Heart left ventricle (tissue), 16 donors: ENCODE measurements at regions of chr11 and their contacts with region 1.

Region 1: DNA sequence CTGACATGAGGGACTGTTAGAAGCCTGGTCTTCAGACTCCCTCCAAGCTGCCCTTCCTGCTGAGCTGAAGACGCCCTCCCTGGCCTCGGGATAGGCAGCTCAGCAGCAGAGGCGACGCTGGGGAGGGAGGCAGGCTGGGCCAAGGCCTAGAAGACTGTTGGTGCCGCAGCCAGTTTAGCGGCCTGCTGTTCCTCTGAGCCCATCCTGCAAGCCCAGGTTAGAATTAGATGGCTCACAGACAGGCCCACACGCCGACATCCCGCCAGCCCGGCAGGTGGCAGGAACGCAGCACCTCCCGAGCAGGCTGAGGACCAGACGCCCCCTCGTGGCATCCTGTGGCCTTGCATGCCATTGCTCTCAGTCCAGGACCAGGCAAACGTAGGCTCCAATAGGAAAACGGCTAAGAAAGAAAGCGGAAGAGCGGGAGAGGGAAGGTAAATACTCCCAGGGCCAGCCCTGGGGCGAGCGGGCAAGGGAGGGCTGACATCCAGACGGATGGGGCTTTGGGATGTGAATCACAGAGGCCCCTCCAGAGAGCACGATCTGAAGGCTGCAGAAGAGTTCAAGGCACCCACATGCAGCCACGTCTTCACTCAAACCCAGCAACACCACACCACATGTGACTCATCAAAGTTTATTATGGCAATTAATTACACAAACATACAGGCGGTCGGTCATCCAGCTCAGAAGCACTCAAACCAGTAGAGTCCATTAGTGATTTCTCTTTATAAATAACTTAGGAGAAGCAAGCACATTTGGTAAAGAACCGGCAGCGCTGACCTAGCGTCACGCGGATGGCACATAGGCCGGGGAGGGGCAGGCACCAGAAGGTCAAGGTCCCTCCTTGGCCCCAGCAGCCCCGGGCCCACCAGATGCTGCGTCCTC is 27.6 kb downstream of the CD5 start:
- DNase-seq: peak; percentile 84 to 92 (median 85)
- ATAC-seq: peak; percentile 66 to 91 (median 88)
- H3K4me3 ChIP-seq: peak overlapping the region in 2 of 12 donors; percentile 9 to 23
- H3K27ac ChIP-seq: peak overlapping the region in 4 of 12 donors; percentile 13 to 61 (median 37)
- H3K4me1 ChIP-seq: peaks cover 0 to 22% (median 11%) of the 10 kb centered on the region in 12 donors
- H3K27me3 ChIP-seq: no peaks in the 10 kb centered on the region
- CTCF ChIP-seq: peak; percentile 94 to 100 (median 99)
- POLR2A ChIP-seq: no peak

Region 2: GRCh38 chr11:60700689-60701480 is 429.0 kb before region 1 on chr11:
- intact Hi-C with region 1: no loop called
- DNase-seq: no peak
- ATAC-seq: no peak
- H3K4me3 ChIP-seq: no peak overlapping the region
- H3K27ac ChIP-seq: no peak overlapping the region
- H3K4me1 ChIP-seq: no peaks in the 10 kb centered on the region
- H3K27me3 ChIP-seq: peaks cover 0 to 4% (median 0%) of the 10 kb centered on the region in 9 donors
- CTCF ChIP-seq: peak in 3 of 12 donors; percentile 7 to 31 (median 18)
- POLR2A ChIP-seq: no peak

Region 3: GRCh38 chr11:60775420-60775961 is 354.4 kb before region 1 on chr11:
- intact Hi-C with region 1: loop called in 2 of 10 experiments (anchors 5 kb)
- DNase-seq: peak; percentile 73 to 85 (median 83)
- ATAC-seq: peak; percentile 79 to 86 (median 85)
- H3K4me3 ChIP-seq: no peak overlapping the region
- H3K27ac ChIP-seq: peak overlapping the region in 6 of 12 donors; percentile 17 to 59 (median 49)
- H3K4me1 ChIP-seq: peaks cover 0 to 22% (median 9%) of the 10 kb centered on the region in 12 donors
- H3K27me3 ChIP-seq: peaks cover 0 to 14% (median 0%) of the 10 kb centered on the region in 9 donors
- CTCF ChIP-seq: peak; percentile 79 to 97 (median 92)
- POLR2A ChIP-seq: no peak

Region 4: DNA sequence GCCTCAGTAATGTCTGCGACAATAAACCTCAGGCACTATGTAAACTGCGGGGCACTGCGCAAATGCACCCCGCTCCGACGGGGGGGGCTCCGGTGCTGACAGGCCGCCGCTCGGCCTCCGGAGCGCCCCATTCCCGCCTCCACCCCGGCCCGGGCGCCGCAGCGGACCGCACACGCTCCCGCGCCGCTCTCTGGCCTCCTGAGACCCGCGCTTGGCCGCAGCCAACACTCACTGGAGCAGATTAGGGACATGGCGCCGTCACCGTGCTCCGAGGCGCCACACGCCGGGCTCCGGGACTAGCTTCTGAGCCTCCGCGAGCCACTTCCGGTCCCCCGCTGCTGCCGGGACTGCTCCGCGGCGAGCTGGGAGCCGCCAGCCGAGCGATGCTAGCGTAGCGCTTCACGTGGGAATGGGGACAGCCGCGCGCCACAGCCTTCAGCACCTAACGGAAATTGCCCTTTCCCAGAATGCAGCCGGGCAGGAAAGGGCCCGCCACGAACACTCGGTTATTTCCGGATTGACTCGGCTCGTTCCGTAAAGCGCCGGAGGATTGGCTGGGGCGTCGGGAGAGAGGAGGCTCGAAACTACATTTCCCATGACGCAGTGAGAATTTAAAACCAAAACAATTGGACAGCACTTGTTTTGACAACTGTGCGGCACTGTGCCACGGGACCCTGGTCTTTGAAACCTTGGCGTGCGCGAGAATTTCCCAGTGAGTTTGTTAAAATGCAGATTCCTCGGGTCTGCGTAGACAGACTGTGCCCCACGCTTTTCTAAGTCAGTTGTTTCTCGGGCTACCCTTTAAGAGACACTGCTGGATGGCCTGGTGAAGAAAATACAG is 223.5 kb before region 1 on chr11 and contains the start of gene PRPF19:
- intact Hi-C with region 1: loop called in 1 of 10 experiments (anchors 10 kb)
- DNase-seq: peak; percentile 97 to 98 (median 97)
- ATAC-seq: peak; percentile 96 to 98 (median 97)
- H3K4me3 ChIP-seq: peak within 1 kb of the TSS; percentile 73 to 99 (median 94)
- H3K27ac ChIP-seq: peak within 1 kb of the TSS; percentile 72 to 98 (median 94)
- H3K4me1 ChIP-seq: peaks cover 8 to 48% (median 28%) of the 10 kb centered on the region in 12 donors
- H3K27me3 ChIP-seq: no peaks in the 10 kb centered on the region
- CTCF ChIP-seq: peak in 1 of 12 donors; percentile 4
- POLR2A ChIP-seq: peak in 1 of 2 donors; percentile 72
- total RNA-seq, gene PRPF19: 30.8 to 72.0 (median 40.8) TPM

Region 5: GRCh38 chr11:60924110-60924905 is 205.6 kb before region 1 on chr11 and contains the start of gene TMEM132A:
- intact Hi-C with region 1: loop called in 2 of 10 experiments (anchors 2 to 5 kb)
- DNase-seq: peak; percentile 73 to 84 (median 82)
- ATAC-seq: peak; percentile 72 to 90 (median 85)
- H3K4me3 ChIP-seq: peak within 1 kb of the TSS; percentile 34 to 88 (median 70)
- H3K27ac ChIP-seq: peak within 1 kb of the TSS in 8 of 12 donors; percentile 13 to 63 (median 45)
- H3K4me1 ChIP-seq: peaks cover 0 to 30% (median 17%) of the 10 kb centered on the region in 12 donors
- H3K27me3 ChIP-seq: peaks cover 0 to 35% (median 0%) of the 10 kb centered on the region in 9 donors
- CTCF ChIP-seq: peak in 1 of 12 donors; percentile 5
- POLR2A ChIP-seq: peak in 1 of 2 donors; percentile 45
- total RNA-seq, gene TMEM132A: 3.1 to 16.1 (median 8.5) TPM

Region 6: DNA sequence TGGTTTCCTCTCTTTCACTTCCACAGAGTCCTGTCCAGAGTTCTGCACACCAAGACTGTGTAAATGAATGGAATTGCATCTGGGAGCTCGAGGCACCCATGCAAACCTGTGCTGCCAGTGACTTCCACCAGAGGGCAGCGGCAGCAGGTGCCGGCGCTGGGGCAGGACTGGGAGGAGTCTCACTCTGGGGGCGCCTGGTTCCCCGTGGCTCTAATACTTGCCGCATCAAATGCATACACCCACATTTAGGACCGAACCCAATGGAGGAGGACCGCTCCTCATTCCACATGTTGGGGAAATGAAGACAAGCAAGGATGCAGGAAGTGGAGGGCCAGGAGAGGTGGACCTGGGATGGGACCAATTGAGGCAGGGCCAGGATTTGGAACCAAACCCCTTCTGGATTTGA is 159.5 kb before region 1 on chr11:
- intact Hi-C with region 1: loop called in 7 of 10 experiments (anchors 1 to 2 kb)
- DNase-seq: peak; percentile 42 to 82 (median 57)
- ATAC-seq: peak; percentile 62 to 79 (median 76)
- H3K4me3 ChIP-seq: no peak overlapping the region
- H3K27ac ChIP-seq: no peak overlapping the region
- H3K4me1 ChIP-seq: peaks cover 0 to 14% (median 0%) of the 10 kb centered on the region in 12 donors
- H3K27me3 ChIP-seq: no peaks in the 10 kb centered on the region
- CTCF ChIP-seq: peak; percentile 75 to 89 (median 84)
- POLR2A ChIP-seq: no peak

Region 7: DNA sequence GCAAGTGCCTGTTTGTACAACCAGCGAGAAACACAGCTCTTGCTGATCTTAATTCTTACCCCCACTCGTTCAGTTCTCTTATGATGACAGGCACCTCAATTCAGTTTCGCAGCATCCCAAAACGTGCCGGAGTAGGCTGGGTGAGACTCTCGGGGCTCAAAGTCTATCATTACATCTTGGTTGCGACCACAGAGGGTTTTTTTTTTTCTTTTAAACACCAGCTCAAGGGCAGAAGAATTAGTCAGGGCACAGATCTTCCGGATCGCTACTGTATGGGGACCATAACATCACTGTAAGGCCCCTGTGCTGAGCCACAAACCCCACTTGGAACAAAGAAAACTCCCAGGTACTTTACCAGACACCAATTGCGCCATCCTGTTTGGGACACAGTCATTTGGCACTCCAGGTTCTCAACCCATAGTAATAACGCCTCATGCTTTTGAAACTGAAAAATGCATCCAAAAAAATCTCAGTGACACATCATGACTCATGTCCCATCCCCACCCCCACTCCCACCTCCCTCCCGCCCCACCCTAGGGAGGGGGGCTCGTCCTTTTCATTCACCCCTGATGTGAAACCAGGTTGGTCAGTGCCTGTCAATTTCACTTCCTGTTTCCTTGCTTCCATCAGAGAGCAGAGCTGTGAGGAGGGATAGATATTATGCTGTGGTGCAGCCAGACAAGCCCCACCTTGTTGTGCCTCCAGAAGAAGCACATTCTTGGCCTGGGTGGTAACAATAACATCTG is 68.6 kb before region 1 on chr11:
- intact Hi-C with region 1: no loop called
- DNase-seq: no peak
- ATAC-seq: peak in 1 of 4 donors; percentile 26
- H3K4me3 ChIP-seq: no peak overlapping the region
- H3K27ac ChIP-seq: peak overlapping the region in 1 of 12 donors; percentile 32
- H3K4me1 ChIP-seq: peaks cover 0 to 15% (median 0%) of the 10 kb centered on the region in 12 donors
- H3K27me3 ChIP-seq: no peaks in the 10 kb centered on the region
- CTCF ChIP-seq: no peak
- POLR2A ChIP-seq: no peak

Region 8: GRCh38 chr11:61162092-61162941 is 32.4 kb after region 1 on chr11:
- intact Hi-C with region 1: no loop called
- DNase-seq: peak in 1 of 5 donors; percentile 39
- ATAC-seq: no peak
- H3K4me3 ChIP-seq: peak overlapping the region; percentile 66 to 97 (median 82)
- H3K27ac ChIP-seq: peak overlapping the region in 11 of 12 donors; percentile 94 to 99 (median 98)
- H3K4me1 ChIP-seq: peaks cover 0 to 64% (median 23%) of the 10 kb centered on the region in 12 donors
- H3K27me3 ChIP-seq: no peaks in the 10 kb centered on the region
- CTCF ChIP-seq: no peak
- POLR2A ChIP-seq: no peak

Region 9: DNA sequence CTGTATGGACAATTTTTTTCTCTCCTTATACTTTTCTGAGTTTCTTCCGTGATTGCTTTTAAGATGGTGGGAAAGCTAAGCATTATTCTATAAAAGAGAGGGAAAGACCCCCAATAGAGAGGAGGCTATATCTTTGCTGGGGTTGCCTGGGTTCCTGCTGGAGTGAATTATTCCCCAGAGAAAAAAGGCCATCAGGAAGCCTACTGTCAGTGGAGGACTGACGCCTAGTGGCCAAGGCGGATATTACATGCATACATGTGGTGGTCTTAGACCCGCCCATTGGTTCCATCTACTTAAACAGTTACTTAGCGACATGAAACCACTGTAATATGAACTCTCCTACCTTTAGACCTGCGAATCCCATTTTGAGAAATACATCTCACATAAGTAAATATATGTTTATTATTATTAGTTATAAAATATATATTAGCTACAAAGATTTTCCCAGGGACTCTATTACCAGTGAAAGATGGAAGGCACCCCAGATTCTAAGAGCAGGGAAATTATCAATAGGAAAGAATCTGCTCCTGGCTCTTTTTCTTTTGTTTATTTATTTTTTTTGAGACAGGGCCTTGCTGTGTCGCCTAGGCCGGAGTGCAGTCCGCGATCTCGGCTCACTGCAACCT is 57.7 kb after region 1 on chr11:
- intact Hi-C with region 1: loop called in 6 of 10 experiments (anchors 2 to 5 kb)
- DNase-seq: peak; percentile 52 to 81 (median 66)
- ATAC-seq: peak in 3 of 4 donors; percentile 64 to 76 (median 72)
- H3K4me3 ChIP-seq: no peak overlapping the region
- H3K27ac ChIP-seq: no peak overlapping the region
- H3K4me1 ChIP-seq: no peaks in the 10 kb centered on the region
- H3K27me3 ChIP-seq: peaks cover 0 to 16% (median 0%) of the 10 kb centered on the region in 9 donors
- CTCF ChIP-seq: peak; percentile 76 to 97 (median 93)
- POLR2A ChIP-seq: no peak

Region 10: GRCh38 chr11:61429691-61430582 is 300.1 kb after region 1 on chr11 and contains the starts of genes CPSF7 and SDHAF2:
- intact Hi-C with region 1: no loop called
- DNase-seq: peak; percentile 97 to 99 (median 98)
- ATAC-seq: peak; percentile 97 to 99 (median 98)
- H3K4me3 ChIP-seq: peak within 1 kb of the TSS; percentile 61 to 97 (median 80)
- H3K27ac ChIP-seq: peak within 1 kb of the TSS; percentile 90 to 99 (median 96)
- H3K4me1 ChIP-seq: peaks cover 0 to 50% (median 37%) of the 10 kb centered on the region in 12 donors
- H3K27me3 ChIP-seq: no peaks in the 10 kb centered on the region
- CTCF ChIP-seq: no peak
- POLR2A ChIP-seq: peak; percentile 24 to 62
- total RNA-seq, gene CPSF7: 27.3 to 52.4 (median 37.6) TPM
- total RNA-seq, gene SDHAF2: 25.7 to 124 (median 33.7) TPM